Lower lobe of right lung (tissue), 2 donors: ENCODE measurements at regions of chr2 and their contacts with region 1.

Region 1: DNA sequence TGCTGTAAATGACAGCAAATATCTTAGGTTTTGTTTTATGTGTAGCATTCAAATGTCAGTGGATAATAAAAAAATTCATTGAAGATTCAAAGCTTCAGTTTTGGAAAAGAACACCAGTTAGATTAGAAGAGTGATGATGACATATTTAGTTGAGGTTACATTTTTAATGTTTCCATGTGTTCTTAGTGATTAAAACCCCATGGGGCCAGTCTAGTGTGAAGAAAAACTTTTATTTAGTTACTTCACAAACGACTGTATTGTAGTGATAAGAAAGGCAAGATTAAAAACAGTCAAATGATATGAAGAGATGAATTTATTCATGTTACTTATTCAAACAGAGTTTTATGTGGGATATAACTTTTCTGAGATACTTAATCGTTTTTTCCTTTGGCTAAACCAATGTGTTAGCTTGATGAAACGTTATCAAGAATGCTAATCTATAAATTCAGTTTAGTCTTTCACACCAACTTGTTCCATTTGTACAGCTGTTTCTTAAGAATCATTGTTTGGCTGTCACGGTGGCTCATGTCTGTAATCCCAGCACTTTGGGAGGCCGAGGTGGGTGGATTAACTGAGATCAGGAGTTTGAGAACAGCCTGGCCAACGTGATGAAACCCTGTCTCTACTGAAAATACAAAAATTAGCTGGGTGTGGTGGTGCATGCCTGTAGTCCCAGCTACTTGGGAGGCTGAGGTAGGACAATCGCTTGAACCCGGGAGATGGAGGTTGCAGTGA is 11.6 kb downstream of the BMPR2 start:
- DNase-seq: no peak
- ATAC-seq: no peak
- H3K4me3 ChIP-seq: no peak overlapping the region
- H3K27ac ChIP-seq: no peak overlapping the region
- H3K4me1 ChIP-seq: peaks cover 34% of the 10 kb centered on the region
- H3K27me3 ChIP-seq: no peaks in the 10 kb centered on the region
- CTCF ChIP-seq: no peak

Region 2: GRCh38 chr2:202479610-202480009 is 91.8 kb after region 1 on chr2:
- intact Hi-C with region 1: loop called (anchors 10 kb)
- DNase-seq: no peak
- ATAC-seq: no peak
- H3K4me3 ChIP-seq: no peak overlapping the region
- H3K27ac ChIP-seq: no peak overlapping the region
- H3K4me1 ChIP-seq: no peaks in the 10 kb centered on the region
- H3K27me3 ChIP-seq: no peaks in the 10 kb centered on the region
- CTCF ChIP-seq: no peak